ENCODE measurements at regions of chr7 and their contacts with region 1.

Region 1: DNA sequence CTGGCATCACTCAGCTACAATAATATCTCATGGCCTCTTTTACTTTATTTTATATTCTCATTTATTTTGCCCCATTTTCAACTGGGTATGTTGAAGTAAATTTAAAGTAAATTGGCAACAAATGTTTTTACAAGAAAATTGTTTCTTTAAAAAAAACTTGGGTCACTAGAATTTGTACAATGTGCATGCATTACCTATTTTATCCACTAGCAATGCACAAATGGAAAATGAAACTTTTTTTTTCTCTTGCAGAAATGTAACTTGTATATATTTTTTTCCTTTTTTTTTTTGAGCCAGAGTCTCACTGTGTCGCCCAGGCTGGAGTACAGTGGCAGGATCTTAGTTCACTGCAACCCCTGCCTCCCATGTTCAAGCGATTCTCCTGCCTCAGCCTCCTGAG is 10.3 kb upstream of the H2AZ2 start:
- DNase-seq: no peak
- ATAC-seq: no peak
- H3K4me3 Mint-ChIP-seq: no peak overlapping the region
- H3K27ac Mint-ChIP-seq: no peak overlapping the region
- H3K4me1 Mint-ChIP-seq: no peaks in the 10 kb centered on the region
- H3K27me3 Mint-ChIP-seq: no peaks in the 10 kb centered on the region
- CTCF ChIP-seq: no peak

Region 2: DNA sequence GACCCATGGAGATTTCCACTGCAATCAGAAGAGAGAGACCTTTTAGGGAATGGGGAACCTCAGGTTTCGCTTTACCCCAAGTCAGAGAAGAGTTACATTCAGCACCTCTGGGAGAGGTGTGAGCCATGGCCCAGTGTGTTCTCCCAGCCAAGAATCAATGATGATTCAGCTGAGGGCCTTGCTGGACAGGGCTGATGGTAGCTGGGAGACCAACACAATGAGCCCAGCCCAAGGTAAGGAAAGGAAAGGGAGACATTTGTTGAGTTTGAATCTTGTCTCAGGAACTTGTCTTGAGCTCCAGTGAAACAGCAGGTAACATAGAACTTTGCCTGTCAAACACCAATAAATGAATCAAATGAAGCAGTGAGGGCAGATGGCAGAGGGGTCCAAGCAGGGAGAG is 75.7 kb before region 1 on chr7:
- CTCF ChIA-PET with region 1: no interaction called
- POLR2A ChIA-PET with region 1: no interaction called
- DNase-seq: no peak
- ATAC-seq: no peak
- H3K4me3 Mint-ChIP-seq: no peak overlapping the region
- H3K27ac Mint-ChIP-seq: no peak overlapping the region
- H3K4me1 Mint-ChIP-seq: no peaks in the 10 kb centered on the region
- H3K27me3 Mint-ChIP-seq: peaks cover 9% of the 10 kb centered on the region
- CTCF ChIP-seq: no peak

Region 3: DNA sequence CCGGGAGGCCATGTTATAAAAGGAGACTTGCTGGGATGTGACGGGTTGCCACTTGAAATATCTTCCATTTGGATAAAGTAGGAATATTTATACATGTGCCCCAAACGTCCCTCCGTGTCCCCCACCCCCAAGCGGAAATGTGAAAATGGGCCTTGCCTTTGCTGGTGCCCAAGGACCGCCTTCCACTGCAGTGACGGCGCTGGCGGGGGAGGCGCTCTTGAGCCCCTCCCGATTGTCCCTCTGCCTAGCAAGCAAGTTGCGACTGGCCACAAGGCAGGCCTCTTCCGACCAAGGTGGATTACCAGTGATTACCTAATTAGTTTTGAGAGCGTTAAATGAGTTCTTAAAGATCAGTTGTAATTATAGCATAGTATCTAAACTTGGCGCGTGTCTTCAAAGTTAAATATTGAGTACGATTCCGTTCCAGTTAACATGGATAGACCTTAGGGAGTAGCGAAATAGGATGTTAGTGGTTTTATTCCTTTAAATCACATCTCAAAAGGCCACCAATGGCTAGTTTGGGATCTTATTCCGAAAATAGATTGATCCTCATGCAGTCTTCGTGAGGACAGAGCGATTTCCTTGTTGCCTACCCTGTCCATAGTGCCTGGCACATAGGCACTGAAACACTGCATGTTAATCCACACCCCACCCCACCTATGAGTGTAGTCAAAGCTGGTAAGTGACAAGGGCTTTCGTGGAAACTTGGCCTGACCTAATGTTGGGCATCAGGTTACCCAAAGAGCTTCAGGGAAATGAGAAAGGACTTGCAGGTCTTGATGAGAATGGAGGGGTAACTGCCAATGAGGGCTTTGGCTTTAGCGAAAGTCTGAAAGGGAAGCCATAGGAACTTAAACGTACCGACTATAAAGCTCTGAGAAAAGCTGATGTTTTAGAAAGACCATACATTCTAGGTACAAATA is 60.6 kb before region 1 on chr7:
- CTCF ChIA-PET with region 1: no interaction called
- POLR2A ChIA-PET with region 1: no interaction called
- DNase-seq: peak; percentile 79
- ATAC-seq: peak; percentile 28
- H3K4me3 Mint-ChIP-seq: peak overlapping the region; percentile 100
- H3K27ac Mint-ChIP-seq: peak overlapping the region; percentile 99
- H3K4me1 Mint-ChIP-seq: peaks cover 18% of the 10 kb centered on the region
- H3K27me3 Mint-ChIP-seq: no peaks in the 10 kb centered on the region
- CTCF ChIP-seq: peak; percentile 40; the same call in 1 of the 2 replicates

Region 4: GRCh38 chr7:44847508-44847920 is 10.6 kb before region 1 on chr7:
- CTCF ChIA-PET with region 1: interaction called, 18 read pairs
- POLR2A ChIA-PET with region 1: interaction called, 10 read pairs
- DNase-seq: peak; percentile 87
- ATAC-seq: peak; percentile 69
- H3K4me3 Mint-ChIP-seq: peak overlapping the region; percentile 99
- H3K27ac Mint-ChIP-seq: peak overlapping the region; percentile 99
- H3K4me1 Mint-ChIP-seq: peaks cover 13% of the 10 kb centered on the region
- H3K27me3 Mint-ChIP-seq: no peaks in the 10 kb centered on the region
- CTCF ChIP-seq: peak; percentile 72

Region 5: GRCh38 chr7:44881610-44882009 is 23.4 kb after region 1 on chr7:
- CTCF ChIA-PET with region 1: interaction called, 13 read pairs
- POLR2A ChIA-PET with region 1: interaction called, 3 read pairs
- DNase-seq: no peak
- ATAC-seq: no peak
- H3K4me3 Mint-ChIP-seq: peak overlapping the region; percentile 90
- H3K27ac Mint-ChIP-seq: no peak overlapping the region
- H3K4me1 Mint-ChIP-seq: peaks cover 41% of the 10 kb centered on the region
- H3K27me3 Mint-ChIP-seq: no peaks in the 10 kb centered on the region
- CTCF ChIP-seq: no peak

Region 6: DNA sequence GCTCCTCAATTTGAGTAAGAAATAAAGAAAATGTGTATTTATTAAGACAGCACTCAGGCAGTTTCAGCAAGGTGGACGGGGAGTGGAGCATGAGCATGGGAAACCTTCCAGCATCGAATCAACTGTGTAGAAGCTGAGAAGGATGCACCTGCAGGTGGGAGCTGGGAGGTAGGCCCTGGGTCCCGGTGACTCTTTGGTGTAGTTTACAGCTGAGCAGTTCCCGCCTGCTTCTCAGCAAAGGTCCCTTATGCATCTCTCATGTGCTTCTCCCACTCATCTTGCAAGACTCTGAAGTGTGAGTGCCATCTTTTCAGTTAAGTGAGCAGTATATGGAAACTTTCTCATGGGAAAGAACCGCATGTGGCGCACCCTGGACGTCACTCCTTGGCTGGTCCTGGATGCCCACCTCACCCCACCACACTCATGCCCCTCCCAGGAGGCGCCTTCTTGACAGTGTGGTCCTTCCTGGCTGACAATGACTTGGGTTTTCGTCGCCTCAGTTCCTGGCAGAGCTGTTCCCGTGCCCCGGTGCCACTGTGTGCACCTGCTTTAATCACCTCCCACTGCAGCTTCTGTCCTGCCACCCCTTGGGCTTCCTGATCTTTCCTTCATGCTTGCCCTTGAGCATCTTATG is 47.0 kb after region 1 on chr7:
- CTCF ChIA-PET with region 1: interaction called, 12 read pairs
- POLR2A ChIA-PET with region 1: no interaction called
- DNase-seq: no peak
- ATAC-seq: no peak
- H3K4me3 Mint-ChIP-seq: no peak overlapping the region
- H3K27ac Mint-ChIP-seq: no peak overlapping the region
- H3K4me1 Mint-ChIP-seq: no peaks in the 10 kb centered on the region
- H3K27me3 Mint-ChIP-seq: peaks cover 4% of the 10 kb centered on the region
- CTCF ChIP-seq: no peak

Region 7: DNA sequence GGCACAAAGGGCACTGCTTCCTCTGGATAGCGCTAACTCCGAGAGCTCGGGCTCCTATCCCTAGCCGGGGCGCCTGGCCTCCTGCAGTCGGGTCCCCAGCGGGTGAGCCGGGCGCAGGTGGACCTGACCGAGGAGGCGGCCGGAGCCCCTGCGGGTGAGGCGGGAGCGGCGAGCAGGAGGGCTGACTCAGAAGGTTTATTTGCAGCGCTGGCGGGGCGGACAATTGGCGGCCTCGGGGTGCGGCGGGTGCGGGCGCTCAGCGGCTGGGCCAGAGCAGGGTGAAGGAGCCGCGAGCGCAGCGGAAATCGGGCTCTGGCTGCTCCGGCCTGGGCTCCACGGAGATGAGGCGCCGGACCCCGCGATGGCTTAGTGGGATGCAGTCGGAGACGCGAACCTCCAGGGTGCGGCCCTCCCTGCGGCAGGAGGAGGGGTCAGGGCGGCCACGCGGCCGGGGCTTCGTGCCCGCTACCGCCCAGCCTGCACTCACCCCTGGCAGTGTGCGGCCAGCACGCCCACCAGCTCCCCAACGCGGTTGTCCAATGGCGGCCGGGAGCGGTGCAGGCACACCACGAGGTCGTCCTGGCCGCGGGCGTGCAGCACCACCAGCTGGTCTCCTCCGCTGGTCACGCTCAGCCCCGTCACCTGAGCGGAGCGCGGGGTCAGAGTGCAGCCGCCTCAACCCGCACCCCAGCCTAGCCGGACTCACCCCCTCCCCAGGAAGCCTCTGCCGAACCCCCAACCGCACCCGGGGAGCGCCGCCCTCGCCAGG is 104.5 kb after region 1 on chr7:
- CTCF ChIA-PET with region 1: interaction called, 17 read pairs
- POLR2A ChIA-PET with region 1: no interaction called
- DNase-seq: peak; percentile 61
- ATAC-seq: peak; percentile 49
- H3K4me3 Mint-ChIP-seq: peak overlapping the region; percentile 34; the same call in 1 of the 2 replicates
- H3K27ac Mint-ChIP-seq: no peak overlapping the region
- H3K4me1 Mint-ChIP-seq: no peaks in the 10 kb centered on the region
- H3K27me3 Mint-ChIP-seq: peaks cover 35% of the 10 kb centered on the region
- CTCF ChIP-seq: no peak